ENCODE measurements at regions of chrX and their contacts with region 1.

Region 1: DNA sequence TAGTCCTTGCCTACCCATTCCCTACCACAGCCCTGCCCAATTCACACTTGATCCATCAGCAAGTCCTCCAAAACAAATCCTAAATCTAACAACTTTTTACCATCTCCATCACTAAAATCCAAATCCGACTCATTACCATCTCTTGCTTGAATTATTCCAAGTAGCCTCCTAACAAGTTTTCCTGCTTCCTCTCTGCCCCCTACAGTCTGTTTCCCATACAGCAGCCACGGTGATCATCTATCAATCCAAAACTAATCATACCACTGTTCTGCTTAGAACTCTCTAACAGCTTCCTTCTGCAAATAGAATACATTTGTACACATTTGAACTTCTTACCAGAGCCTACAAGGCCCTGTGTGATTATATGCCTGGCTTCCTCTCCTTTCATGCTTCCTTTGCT is 133.0 kb downstream of the SHROOM4 start:
- DNase-seq: no peak
- ATAC-seq: no peak
- H3K4me3 ChIP-seq: no peak overlapping the region
- H3K27ac ChIP-seq: no peak overlapping the region
- H3K4me1 ChIP-seq: no peaks in the 10 kb centered on the region
- H3K27me3 ChIP-seq: peaks cover 3% of the 10 kb centered on the region
- CTCF ChIP-seq: peak; percentile 21; the same call in 1 of the 2 replicates
- POLR2A ChIP-seq: no peak
- RAD21 ChIP-seq: no peak

Region 2: GRCh38 chrX:50668860-50669259 is 12.1 kb before region 1 on chrX:
- CTCF ChIA-PET with region 1: no interaction called
- POLR2A ChIA-PET with region 1: no interaction called
- dilution Hi-C with region 1: no loop called
- in situ Hi-C with region 1: no loop called
- intact Hi-C with region 1: no loop called
- DNase-seq: no peak
- ATAC-seq: no peak
- H3K4me3 ChIP-seq: no peak overlapping the region
- H3K27ac ChIP-seq: no peak overlapping the region
- H3K4me1 ChIP-seq: no peaks in the 10 kb centered on the region
- H3K27me3 ChIP-seq: no peaks in the 10 kb centered on the region; the same call in none of the 2 replicates
- CTCF ChIP-seq: no peak
- POLR2A ChIP-seq: no peak
- RAD21 ChIP-seq: no peak

Region 3: GRCh38 chrX:50736656-50737055 is 55.7 kb after region 1 on chrX:
- CTCF ChIA-PET with region 1: no interaction called
- POLR2A ChIA-PET with region 1: no interaction called
- dilution Hi-C with region 1: no loop called
- in situ Hi-C with region 1: no loop called
- intact Hi-C with region 1: loop called (anchors 1 kb)
- DNase-seq: no peak
- ATAC-seq: no peak
- H3K4me3 ChIP-seq: no peak overlapping the region
- H3K27ac ChIP-seq: no peak overlapping the region
- H3K4me1 ChIP-seq: no peaks in the 10 kb centered on the region
- H3K27me3 ChIP-seq: peaks cover 1% of the 10 kb centered on the region; the same call in 1 of the 2 replicates
- CTCF ChIP-seq: no peak
- POLR2A ChIP-seq: no peak
- RAD21 ChIP-seq: no peak

Region 4: DNA sequence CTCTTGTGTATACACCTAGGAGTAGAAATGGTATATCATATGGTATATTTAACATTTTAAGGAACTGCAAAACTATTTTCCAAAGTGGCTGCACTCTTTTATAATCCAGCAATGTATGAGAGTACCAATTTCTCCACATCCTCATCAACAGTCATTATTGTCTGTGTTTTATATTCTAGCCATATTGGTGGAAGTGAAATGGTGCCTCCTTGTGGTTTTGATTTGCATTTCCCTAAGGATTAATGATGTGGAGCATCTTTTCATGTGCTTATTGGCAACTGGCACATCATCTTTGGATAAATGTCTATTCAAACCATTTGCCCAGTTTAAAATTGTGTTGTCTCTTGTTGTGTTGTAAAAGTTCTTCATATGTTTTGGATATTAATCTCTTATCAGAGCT is 239.1 kb after region 1 on chrX:
- CTCF ChIA-PET with region 1: no interaction called
- POLR2A ChIA-PET with region 1: no interaction called
- dilution Hi-C with region 1: no loop called
- in situ Hi-C with region 1: loop called (anchors 10 kb)
- intact Hi-C with region 1: no loop called
- DNase-seq: peak; percentile 18
- ATAC-seq: no peak
- H3K4me3 ChIP-seq: no peak overlapping the region
- H3K27ac ChIP-seq: no peak overlapping the region
- H3K4me1 ChIP-seq: no peaks in the 10 kb centered on the region
- H3K27me3 ChIP-seq: peaks cover 5% of the 10 kb centered on the region
- CTCF ChIP-seq: peak; percentile 49
- POLR2A ChIP-seq: no peak
- RAD21 ChIP-seq: peak; percentile 52

Measured in IMR-90 (cell line).